CD4-positive, alpha-beta memory T cell (primary cell): ENCODE measurements at regions of chr1 and their contacts with region 1.

Region 1: GRCh38 chr1:61318319-61319125 is 236.2 kb downstream of the NFIA start:
- DNase-seq: no peak
- H3K4me3 ChIP-seq: no peak overlapping the region
- H3K4me3 Mint-ChIP-seq: peak overlapping the region in 1 of 8 donors; percentile 39
- H3K27ac ChIP-seq: no peak overlapping the region
- H3K27ac Mint-ChIP-seq: no peak overlapping the region
- H3K4me1 ChIP-seq: no peaks in the 10 kb centered on the region
- H3K4me1 Mint-ChIP-seq: peaks cover 3 to 8% (median 4%) of the 10 kb centered on the region in 4 donors
- H3K27me3 ChIP-seq: no peaks in the 10 kb centered on the region
- H3K27me3 Mint-ChIP-seq: no peaks in the 10 kb centered on the region

Region 2: DNA sequence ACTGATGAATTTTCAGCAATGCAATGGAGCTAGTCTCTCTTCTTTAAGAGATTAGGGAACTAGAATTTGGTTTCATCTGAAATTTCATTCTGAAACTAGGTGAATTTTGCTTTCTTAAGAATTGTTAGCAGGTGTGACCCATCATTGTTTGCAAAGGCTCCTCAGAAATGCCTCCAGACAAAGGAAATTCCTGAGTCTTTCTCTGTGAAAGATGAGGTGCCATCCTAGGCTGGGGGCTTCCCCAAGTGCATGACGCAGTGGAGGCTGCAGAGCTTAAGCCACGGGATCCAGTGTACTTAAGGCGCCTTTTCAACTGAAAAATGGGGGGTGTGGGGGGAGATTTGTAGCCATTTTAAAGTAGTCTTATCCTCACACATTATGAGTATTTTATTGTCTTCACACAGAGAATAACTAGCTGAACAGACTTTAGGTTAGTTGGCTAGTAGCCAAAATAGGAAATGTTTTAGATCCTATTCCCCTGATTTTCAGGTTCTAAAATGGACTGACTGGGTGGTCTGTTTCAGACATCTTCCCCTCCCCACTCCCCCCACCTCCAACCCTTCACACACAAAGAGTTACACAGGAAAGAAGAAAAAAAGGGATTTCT is 34.2 kb before region 1 on chr1:
- CTCF ChIA-PET with region 1: no interaction called
- POLR2A ChIA-PET with region 1: no interaction called
- intact Hi-C with region 1: no loop called
- DNase-seq: no peak
- H3K4me3 ChIP-seq: no peak overlapping the region
- H3K4me3 Mint-ChIP-seq: no peak overlapping the region
- H3K27ac ChIP-seq: no peak overlapping the region
- H3K27ac Mint-ChIP-seq: no peak overlapping the region
- H3K4me1 ChIP-seq: no peaks in the 10 kb centered on the region
- H3K4me1 Mint-ChIP-seq: no peaks in the 10 kb centered on the region
- H3K27me3 ChIP-seq: no peaks in the 10 kb centered on the region
- H3K27me3 Mint-ChIP-seq: no peaks in the 10 kb centered on the region

Region 3: GRCh38 chr1:61299463-61299862 is 19.1 kb before region 1 on chr1:
- CTCF ChIA-PET with region 1: no interaction called
- POLR2A ChIA-PET with region 1: no interaction called
- intact Hi-C with region 1: no loop called
- DNase-seq: no peak
- H3K4me3 ChIP-seq: no peak overlapping the region
- H3K4me3 Mint-ChIP-seq: no peak overlapping the region
- H3K27ac ChIP-seq: no peak overlapping the region
- H3K27ac Mint-ChIP-seq: no peak overlapping the region
- H3K4me1 ChIP-seq: no peaks in the 10 kb centered on the region
- H3K4me1 Mint-ChIP-seq: peaks cover 7 to 10% (median 9%) of the 10 kb centered on the region in 4 donors
- H3K27me3 ChIP-seq: no peaks in the 10 kb centered on the region
- H3K27me3 Mint-ChIP-seq: no peaks in the 10 kb centered on the region

Region 4: DNA sequence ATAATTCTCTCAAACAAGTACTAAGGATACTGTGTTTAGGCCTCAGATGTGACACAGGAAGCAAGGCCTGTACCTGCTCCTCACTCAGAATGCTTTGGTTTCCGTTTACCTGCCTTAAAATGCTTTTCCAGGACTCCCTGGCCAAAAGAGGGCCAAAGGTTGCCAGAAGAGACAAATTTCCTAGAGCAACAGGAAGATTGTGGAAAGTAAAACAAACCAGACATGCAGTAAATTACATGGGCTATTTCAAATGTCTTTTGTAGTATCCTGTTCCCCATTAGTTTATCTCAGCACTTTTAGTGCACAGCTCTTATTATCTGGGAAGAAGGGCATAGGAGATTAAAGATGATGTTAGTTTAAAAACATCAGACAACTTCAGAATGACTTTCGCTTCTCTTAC is 43.8 kb after region 1 on chr1:
- CTCF ChIA-PET with region 1: no interaction called
- POLR2A ChIA-PET with region 1: no interaction called
- intact Hi-C with region 1: loop called (anchors 2 kb)
- DNase-seq: no peak
- H3K4me3 ChIP-seq: no peak overlapping the region
- H3K4me3 Mint-ChIP-seq: no peak overlapping the region
- H3K27ac ChIP-seq: no peak overlapping the region
- H3K27ac Mint-ChIP-seq: no peak overlapping the region
- H3K4me1 ChIP-seq: no peaks in the 10 kb centered on the region
- H3K4me1 Mint-ChIP-seq: no peaks in the 10 kb centered on the region
- H3K27me3 ChIP-seq: no peaks in the 10 kb centered on the region
- H3K27me3 Mint-ChIP-seq: no peaks in the 10 kb centered on the region